Heart left ventricle (tissue), 16 donors: ENCODE measurements at regions of chr18 and their contacts with region 1.

Region 1: DNA sequence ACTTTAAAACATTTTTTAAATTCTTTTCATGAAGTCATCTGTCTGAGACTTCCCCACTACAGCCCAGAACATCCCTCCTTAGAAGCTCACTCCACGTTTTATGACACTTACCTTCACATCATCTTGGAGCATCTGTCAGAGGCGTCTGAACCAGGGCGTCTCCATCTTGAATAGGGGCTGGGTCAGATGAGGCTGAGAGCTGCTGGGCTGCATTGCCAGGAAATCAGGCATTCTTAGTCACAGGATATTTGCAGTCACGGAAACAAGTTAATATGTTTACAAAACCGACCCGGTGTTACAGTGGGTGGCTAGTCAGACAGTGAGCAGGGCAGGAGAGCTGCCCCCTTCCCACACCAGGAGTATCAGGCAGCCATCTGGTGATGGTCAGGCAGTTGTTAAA is 456.5 kb downstream of the FBXO15 start:
- DNase-seq: peak in 1 of 5 donors; percentile 33
- ATAC-seq: peak; percentile 26 to 56 (median 38)
- H3K4me3 ChIP-seq: peak overlapping the region in 5 of 12 donors; percentile 2 to 29 (median 24)
- H3K27ac ChIP-seq: peak overlapping the region in 7 of 12 donors; percentile 19 to 75 (median 31)
- H3K4me1 ChIP-seq: peaks cover 0 to 6% (median 0%) of the 10 kb centered on the region in 12 donors
- H3K27me3 ChIP-seq: peaks cover 0 to 8% (median 0%) of the 10 kb centered on the region in 9 donors
- CTCF ChIP-seq: no peak
- POLR2A ChIP-seq: no peak

Region 2: DNA sequence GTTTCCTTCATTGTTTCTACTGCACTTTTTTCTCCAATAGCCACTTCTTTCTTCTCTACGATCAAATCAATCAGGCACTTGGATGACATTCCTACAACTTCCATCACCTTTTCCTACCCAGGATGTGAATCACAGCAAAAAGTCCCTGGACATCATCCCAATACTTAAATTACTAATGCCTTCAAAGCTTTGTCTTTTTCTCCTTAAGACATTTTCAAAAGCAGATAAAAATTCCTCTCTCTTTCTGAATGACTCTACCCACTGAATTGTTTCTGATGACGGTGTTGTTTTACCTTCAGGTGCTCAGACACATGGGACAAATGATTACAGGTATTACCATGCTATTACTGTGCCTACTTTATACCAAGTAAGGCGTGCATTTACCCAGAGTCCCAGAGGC is 44.3 kb before region 1 on chr18:
- intact Hi-C with region 1: no loop called
- DNase-seq: no peak
- ATAC-seq: no peak
- H3K4me3 ChIP-seq: no peak overlapping the region
- H3K27ac ChIP-seq: peak overlapping the region in 1 of 12 donors; percentile 35
- H3K4me1 ChIP-seq: no peaks in the 10 kb centered on the region
- H3K27me3 ChIP-seq: no peaks in the 10 kb centered on the region
- CTCF ChIP-seq: no peak
- POLR2A ChIP-seq: no peak

Region 3: DNA sequence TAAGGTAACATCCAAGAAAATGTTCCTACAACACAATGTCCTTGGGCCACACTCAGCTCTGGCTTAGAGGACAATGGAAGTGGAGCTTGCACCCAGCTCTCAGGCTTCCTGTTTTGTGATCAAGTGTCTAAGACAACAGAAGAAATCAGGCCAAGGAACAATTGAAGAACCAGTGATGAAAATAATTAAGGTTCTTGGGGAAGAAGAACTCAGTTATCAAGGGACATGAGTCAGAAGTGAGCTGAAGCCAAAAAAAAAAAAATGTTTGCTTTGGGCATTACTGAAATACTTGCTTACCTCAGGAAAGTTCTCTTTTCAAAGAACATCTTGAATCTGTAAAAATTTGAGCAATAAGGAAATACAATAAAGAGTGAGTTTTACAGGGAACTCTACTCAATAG is 157.5 kb after region 1 on chr18:
- intact Hi-C with region 1: loop called in 1 of 10 experiments (anchors 5 kb)
- DNase-seq: no peak
- ATAC-seq: peak in 3 of 4 donors; percentile 37 to 83 (median 75)
- H3K4me3 ChIP-seq: no peak overlapping the region
- H3K27ac ChIP-seq: peak overlapping the region in 2 of 12 donors; percentile 60 to 65
- H3K4me1 ChIP-seq: peaks cover 0 to 6% (median 0%) of the 10 kb centered on the region in 12 donors
- H3K27me3 ChIP-seq: peaks cover 0 to 4% (median 0%) of the 10 kb centered on the region in 9 donors
- CTCF ChIP-seq: no peak
- POLR2A ChIP-seq: no peak